MCF 10A (cell line): ENCODE measurements at regions of chr1 and their contacts with region 1.

Region 1: DNA sequence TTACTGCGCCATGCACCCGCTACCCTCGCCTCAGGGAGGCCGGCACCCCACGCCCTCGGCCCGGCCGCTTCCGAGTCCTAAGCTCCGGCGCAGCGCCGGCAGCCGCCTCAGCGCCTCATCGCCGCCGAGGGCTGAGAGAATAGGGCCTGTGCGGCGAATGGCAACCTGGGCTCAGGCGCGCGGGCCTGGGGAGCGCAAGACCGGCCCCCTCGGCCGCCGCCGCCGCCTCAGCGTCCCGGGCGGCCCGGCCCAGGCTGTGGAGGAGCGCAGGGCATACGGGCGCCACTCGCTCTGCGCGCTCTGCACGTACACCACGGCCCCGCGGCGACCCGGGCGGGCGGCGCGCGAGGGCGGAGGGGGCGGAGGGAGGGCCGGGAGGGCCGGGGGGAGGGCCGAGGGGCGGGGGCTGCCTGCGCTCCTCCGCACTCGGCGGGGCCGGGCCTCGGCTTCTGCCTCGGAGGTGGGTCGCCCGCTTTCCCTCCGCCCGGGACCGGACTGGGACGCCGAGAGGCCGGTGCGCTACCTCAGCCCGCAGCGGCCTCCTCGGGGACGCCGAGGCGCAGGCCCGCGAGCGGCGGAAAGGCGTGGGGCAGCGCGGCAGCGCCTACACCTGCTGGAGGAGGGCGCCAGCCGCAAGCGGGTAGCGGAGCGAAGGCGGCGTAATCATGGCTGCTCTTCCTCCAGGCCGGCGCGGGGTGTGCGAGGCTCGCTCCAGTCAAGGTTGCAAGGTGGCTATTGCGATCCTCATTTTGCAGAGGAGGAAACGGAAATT is at the start of gene EGLN1:
- DNase-seq: peak; percentile 95
- H3K4me3 Mint-ChIP-seq: peak within 1 kb of the TSS; percentile 82
- H3K27ac Mint-ChIP-seq: peak within 1 kb of the TSS; percentile 87
- H3K4me1 Mint-ChIP-seq: peaks cover 34% of the 10 kb centered on the region
- H3K27me3 Mint-ChIP-seq: no peaks in the 10 kb centered on the region
- CTCF ChIP-seq: peak; percentile 43
- total RNA-seq, gene EGLN1: 67.3 and 68.8 TPM in 2 replicates

Region 2: DNA sequence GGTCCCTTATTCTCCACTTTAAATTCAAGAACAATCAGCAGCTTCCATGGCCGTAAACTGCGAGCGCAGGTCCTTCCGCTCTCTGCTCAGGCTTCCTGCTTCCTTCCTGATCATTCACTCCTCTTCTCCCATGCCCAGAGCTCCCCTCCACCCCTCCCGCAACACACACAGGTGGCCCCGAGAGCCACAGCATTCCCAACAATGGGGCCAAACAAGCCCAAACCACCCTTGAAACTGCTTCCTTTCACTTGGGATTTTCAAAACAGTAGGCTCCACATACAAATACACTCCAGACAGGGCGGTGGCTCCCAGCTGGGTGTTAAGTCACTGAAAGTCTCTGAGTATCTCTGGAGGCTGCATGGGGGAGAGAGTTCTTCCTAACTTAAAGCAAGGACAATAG is 393.5 kb before region 1 on chr1:
- CTCF ChIA-PET with region 1: no interaction called
- POLR2A ChIA-PET with region 1: no interaction called
- intact Hi-C with region 1: no loop called
- DNase-seq: no peak
- H3K4me3 Mint-ChIP-seq: no peak overlapping the region
- H3K27ac Mint-ChIP-seq: no peak overlapping the region
- H3K4me1 Mint-ChIP-seq: no peaks in the 10 kb centered on the region
- H3K27me3 Mint-ChIP-seq: no peaks in the 10 kb centered on the region
- CTCF ChIP-seq: no peak

Region 3: DNA sequence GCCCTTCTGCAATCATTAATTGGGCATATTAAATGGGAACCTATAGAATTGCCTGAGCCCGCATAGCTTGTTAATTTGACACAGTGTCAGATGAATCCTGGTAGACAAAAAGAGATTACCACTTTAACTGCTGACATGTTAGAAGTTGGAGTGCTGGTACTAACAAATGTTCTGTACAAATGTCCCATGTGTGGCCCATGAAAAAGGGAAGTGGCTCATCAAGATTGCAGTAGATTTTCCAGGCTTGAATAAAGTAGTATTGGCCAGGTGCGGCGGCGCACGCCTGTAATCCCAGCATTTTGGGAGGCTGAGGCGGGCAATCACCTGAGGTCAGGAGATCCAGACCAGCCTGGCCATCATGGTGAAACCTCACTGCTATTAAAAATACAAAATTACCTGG is 135.6 kb before region 1 on chr1:
- CTCF ChIA-PET with region 1: no interaction called
- POLR2A ChIA-PET with region 1: no interaction called
- intact Hi-C with region 1: no loop called
- DNase-seq: no peak
- H3K4me3 Mint-ChIP-seq: no peak overlapping the region
- H3K27ac Mint-ChIP-seq: no peak overlapping the region
- H3K4me1 Mint-ChIP-seq: no peaks in the 10 kb centered on the region
- H3K27me3 Mint-ChIP-seq: peaks cover 11% of the 10 kb centered on the region
- CTCF ChIP-seq: no peak

Region 4: GRCh38 chr1:231383159-231383860 is 38.9 kb before region 1 on chr1:
- CTCF ChIA-PET with region 1: interaction called, 5 read pairs
- POLR2A ChIA-PET with region 1: interaction called, 247 read pairs
- intact Hi-C with region 1: loop called (anchors 2 kb)
- DNase-seq: peak; percentile 85
- H3K4me3 Mint-ChIP-seq: no peak overlapping the region
- H3K27ac Mint-ChIP-seq: no peak overlapping the region
- H3K4me1 Mint-ChIP-seq: peaks cover 15% of the 10 kb centered on the region
- H3K27me3 Mint-ChIP-seq: no peaks in the 10 kb centered on the region
- CTCF ChIP-seq: no peak

Region 5: DNA sequence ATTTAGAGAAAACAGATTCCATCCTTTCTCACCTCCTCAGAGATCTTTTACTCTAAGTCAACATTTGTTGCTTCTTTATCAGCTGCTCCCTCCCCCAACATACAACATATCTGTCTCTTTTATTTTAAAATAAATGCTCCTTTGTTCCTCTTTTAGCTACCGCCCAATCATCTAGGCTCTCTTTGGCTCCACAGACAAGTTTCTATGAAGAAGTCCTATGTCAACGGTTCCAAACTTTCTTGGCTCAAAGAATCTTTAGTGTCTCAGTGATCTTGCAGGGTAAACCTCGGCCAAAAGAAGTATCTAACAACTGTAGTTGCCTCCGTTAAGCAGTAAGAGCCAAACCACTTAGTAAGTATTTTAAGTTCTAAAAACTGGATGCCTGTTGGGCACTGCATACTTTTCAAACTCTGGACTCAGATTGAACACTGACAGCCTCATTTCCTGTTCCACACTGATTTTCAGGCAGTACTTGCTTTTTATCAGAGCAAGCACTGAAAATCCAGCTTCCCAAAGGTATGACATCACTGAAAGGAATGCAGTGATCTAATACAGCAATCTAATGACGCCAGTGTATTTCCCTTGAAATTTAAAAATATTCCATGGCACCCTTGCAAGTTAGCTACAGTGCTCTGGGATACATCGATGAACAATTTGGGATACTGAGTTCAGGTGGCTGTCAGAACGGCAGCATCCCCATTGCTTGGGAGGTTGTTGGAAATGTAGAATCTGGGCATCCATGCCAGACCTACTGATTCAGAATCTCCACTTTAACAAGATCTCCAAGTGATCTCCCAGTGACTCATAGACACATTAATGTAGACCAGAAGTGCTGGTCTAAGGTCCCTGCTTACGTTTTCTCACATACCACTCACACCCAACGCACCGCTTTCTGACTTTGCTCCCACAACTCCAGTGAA is 26.8 kb before region 1 on chr1:
- CTCF ChIA-PET with region 1: interaction called, 15 read pairs
- POLR2A ChIA-PET with region 1: interaction called, 247 read pairs
- intact Hi-C with region 1: loop called (anchors 2 kb)
- DNase-seq: peak; percentile 88
- H3K4me3 Mint-ChIP-seq: peak overlapping the region; percentile 52
- H3K27ac Mint-ChIP-seq: peak overlapping the region; percentile 79
- H3K4me1 Mint-ChIP-seq: peaks cover 72% of the 10 kb centered on the region
- H3K27me3 Mint-ChIP-seq: no peaks in the 10 kb centered on the region
- CTCF ChIP-seq: no peak

Region 6: DNA sequence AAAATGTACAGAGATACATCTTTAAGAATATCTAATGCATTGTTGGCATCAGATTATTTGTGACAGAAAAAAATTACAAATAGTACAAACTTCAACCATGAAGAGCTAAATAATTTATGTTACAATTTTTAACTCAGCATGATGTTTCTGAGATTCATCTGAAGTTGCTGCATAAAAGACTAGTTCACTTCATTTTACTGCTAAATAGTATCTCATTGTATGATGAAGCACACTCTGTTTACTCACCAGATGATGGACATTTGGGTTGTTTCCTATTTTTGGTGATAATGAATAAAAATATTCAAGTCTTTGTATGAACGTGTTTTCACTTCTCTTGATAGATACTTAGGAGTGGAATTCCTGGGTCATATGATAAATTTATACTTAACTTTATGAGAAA is 20.7 kb before region 1 on chr1:
- CTCF ChIA-PET with region 1: interaction called, 9 read pairs
- POLR2A ChIA-PET with region 1: interaction called, 247 read pairs
- intact Hi-C with region 1: loop called (anchors 2 kb)
- DNase-seq: no peak
- H3K4me3 Mint-ChIP-seq: no peak overlapping the region
- H3K27ac Mint-ChIP-seq: no peak overlapping the region
- H3K4me1 Mint-ChIP-seq: peaks cover 36% of the 10 kb centered on the region
- H3K27me3 Mint-ChIP-seq: no peaks in the 10 kb centered on the region
- CTCF ChIP-seq: no peak

Region 7: GRCh38 chr1:231407547-231408396 is 14.4 kb before region 1 on chr1:
- CTCF ChIA-PET with region 1: interaction called, 20 read pairs
- POLR2A ChIA-PET with region 1: interaction called, 247 read pairs
- intact Hi-C with region 1: loop called (anchors 2 kb)
- DNase-seq: peak; percentile 68
- H3K4me3 Mint-ChIP-seq: no peak overlapping the region
- H3K27ac Mint-ChIP-seq: no peak overlapping the region
- H3K4me1 Mint-ChIP-seq: peaks cover 15% of the 10 kb centered on the region
- H3K27me3 Mint-ChIP-seq: no peaks in the 10 kb centered on the region
- CTCF ChIP-seq: no peak

Region 8: DNA sequence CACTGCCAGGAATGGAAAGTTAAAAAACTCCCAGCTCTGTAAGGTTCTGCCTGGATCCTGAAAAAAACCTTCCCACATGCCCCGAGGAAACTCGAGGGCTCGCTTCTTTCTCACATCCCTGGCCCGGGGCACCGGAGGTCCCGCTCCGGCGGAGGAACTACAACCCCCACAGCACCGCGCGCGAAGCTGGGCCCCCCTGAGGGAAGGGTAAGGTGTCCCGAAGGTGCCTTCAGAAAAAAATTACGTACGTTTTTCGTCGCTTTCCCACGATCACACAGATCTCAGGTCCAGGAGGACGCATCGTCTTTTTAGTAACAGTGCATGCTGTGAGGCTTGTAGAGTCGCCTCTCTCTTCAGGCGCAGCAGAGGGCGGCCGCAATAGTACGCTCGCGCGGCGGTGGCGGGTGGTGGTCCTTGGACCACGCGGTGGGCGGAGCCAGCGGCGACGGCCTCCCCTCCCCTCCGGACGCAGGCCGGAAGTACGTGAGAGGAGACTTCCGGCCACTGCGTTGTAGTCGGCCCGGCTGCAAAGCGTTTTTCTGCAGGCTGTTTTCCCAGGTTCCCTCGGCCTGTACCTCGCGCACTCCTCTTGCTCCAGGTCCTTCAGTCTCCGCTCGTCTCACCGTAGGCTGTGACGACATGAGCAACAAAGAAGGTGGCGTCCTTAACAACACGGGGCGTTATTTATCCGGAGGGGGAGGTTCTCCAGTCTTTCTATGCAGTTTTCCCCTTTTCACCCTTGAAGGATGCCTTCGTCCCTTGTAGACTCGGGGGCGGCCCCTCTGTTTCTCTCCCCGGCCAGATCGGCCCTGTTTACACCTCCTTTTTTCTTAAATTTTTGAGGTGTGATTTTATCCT is 106.2 kb after region 1 on chr1 and contains the start of gene TSNAX:
- CTCF ChIA-PET with region 1: interaction called, 6 read pairs
- POLR2A ChIA-PET with region 1: interaction called, 53 read pairs
- intact Hi-C with region 1: loop called (anchors 1 kb)
- DNase-seq: peak; percentile 97
- H3K4me3 Mint-ChIP-seq: peak within 1 kb of the TSS; percentile 97
- H3K27ac Mint-ChIP-seq: peak within 1 kb of the TSS; percentile 98
- H3K4me1 Mint-ChIP-seq: peaks cover 36% of the 10 kb centered on the region
- H3K27me3 Mint-ChIP-seq: no peaks in the 10 kb centered on the region
- CTCF ChIP-seq: no peak
- total RNA-seq, gene TSNAX: 79.0 and 80.2 TPM in 2 replicates

Region 9: DNA sequence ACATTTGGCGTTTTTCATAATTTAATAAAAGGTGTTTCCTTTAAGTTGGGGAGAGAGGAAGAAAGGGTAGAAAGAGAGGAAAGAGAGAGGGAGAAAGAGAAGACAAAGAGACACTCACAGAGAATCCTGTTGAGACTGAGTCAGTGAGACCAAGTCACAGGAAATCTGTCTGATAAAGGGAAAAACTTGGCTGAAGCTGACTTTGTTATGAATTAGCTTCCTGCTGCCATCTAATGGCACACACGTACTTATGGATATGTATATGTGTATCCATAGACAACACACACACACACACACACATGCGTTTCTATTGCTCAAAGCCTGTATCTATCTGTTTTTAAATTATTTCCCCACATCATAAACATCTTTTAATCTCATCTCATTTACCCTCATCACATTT is 161.9 kb after region 1 on chr1:
- CTCF ChIA-PET with region 1: interaction called, 3 read pairs
- POLR2A ChIA-PET with region 1: no interaction called
- intact Hi-C with region 1: loop called (anchors 1 kb)
- DNase-seq: peak; percentile 73
- H3K4me3 Mint-ChIP-seq: no peak overlapping the region
- H3K27ac Mint-ChIP-seq: no peak overlapping the region
- H3K4me1 Mint-ChIP-seq: peaks cover 6% of the 10 kb centered on the region
- H3K27me3 Mint-ChIP-seq: no peaks in the 10 kb centered on the region
- CTCF ChIP-seq: peak; percentile 54